GM12878 (cell line): ENCODE measurements at regions of chr20 and their contacts with region 1.

Region 1: GRCh38 chr20:64119681-64120341 is 12.4 kb upstream of the NPBWR2 start:
- DNase-seq: no peak
- ATAC-seq: peak; percentile 51
- H3K4me3 ChIP-seq: no peak overlapping the region
- H3K27ac ChIP-seq: no peak overlapping the region
- H3K4me1 ChIP-seq: peaks cover 5% of the 10 kb centered on the region
- H3K27me3 ChIP-seq: no peaks in the 10 kb centered on the region; a peak in 1 of 4 replicates
- CTCF ChIP-seq: no peak
- EP300 ChIP-seq: no peak
- POLR2A ChIP-seq: no peak
- RAD21 ChIP-seq: no peak

Region 2: DNA sequence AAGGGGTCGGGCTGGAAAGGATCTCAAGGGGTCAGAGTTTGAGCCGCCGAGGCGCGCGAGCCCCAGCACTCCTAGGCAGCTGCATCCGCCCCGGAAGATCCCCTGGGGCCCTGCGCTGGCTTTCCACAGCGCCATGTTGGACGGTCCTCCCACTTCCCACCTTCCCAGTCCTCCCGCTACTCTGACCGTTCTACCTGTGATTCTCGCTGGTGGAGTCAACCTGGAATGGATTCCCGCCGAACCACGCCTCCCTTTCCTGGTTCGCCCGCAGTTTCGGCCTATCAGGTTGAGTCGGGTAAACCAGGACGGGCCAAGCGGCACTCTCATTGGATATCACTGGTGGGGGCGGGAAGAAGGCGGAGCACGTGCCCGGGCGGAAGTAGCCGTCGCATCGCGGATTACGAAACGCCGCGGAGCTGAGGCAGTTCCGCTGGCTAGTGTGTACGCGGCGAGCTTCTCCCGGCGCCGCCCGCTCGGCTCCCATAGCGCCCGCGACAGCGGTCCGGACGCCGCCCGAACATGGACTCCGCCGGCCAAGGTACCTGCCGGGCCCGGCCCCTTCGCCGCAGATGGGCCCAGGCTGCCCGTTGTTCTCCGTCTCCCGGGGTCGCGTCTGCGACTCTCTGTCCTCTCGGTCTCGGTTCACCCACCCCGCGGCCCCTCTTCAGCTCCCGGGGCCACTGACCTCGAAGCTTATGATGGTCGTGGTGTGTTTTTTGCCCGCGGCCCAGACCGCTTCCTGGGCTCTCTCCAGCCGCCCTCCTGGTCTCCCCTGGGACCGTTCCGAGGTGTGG is 254.8 kb before region 1 on chr20 and contains the start of gene TPD52L2:
- CTCF ChIA-PET with region 1: interaction called, 12 read pairs
- POLR2A ChIA-PET with region 1: no interaction called
- RAD21 ChIA-PET with region 1: interaction called, 4 read pairs
- SMC1A ChIA-PET with region 1: no interaction called
- in situ Hi-C with region 1: no loop called
- intact Hi-C with region 1: no loop called
- DNase-seq: peak; percentile 94
- ATAC-seq: peak; percentile 91
- H3K4me3 ChIP-seq: peak within 1 kb of the TSS; percentile 96
- H3K27ac ChIP-seq: peak within 1 kb of the TSS; percentile 90
- H3K4me1 ChIP-seq: peaks cover 7% of the 10 kb centered on the region
- H3K27me3 ChIP-seq: no peaks in the 10 kb centered on the region
- CTCF ChIP-seq: no peak
- EP300 ChIP-seq: 0 out of 4 replicates have a peak, but pooled peaks of 1 of the 2 experiments have one; percentile 19
- POLR2A ChIP-seq: peak; percentile 96
- RAD21 ChIP-seq: no peak
- polyA plus RNA-seq, gene TPD52L2: 1.6 to 4.1 TPM

Region 3: GRCh38 chr20:64038565-64039292 is 81.1 kb before region 1 on chr20:
- CTCF ChIA-PET with region 1: interaction called, 27 read pairs
- POLR2A ChIA-PET with region 1: interaction called, 5 read pairs
- RAD21 ChIA-PET with region 1: interaction called, 10 read pairs
- SMC1A ChIA-PET with region 1: interaction called, 12 read pairs
- in situ Hi-C with region 1: no loop called
- intact Hi-C with region 1: loop called (anchors 1 kb)
- DNase-seq: no peak
- ATAC-seq: peak; percentile 68
- H3K4me3 ChIP-seq: peak overlapping the region; percentile 58
- H3K27ac ChIP-seq: peak overlapping the region; percentile 69
- H3K4me1 ChIP-seq: peaks cover 51% of the 10 kb centered on the region
- H3K27me3 ChIP-seq: no peaks in the 10 kb centered on the region
- CTCF ChIP-seq: peak; percentile 65 to 85 (median 82)
- EP300 ChIP-seq: no peak
- POLR2A ChIP-seq: peak; percentile 61
- RAD21 ChIP-seq: peak; percentile 72

Region 4: GRCh38 chr20:64079273-64080012 is 40.4 kb before region 1 on chr20 and contains the start of gene RGS19:
- CTCF ChIA-PET with region 1: interaction called, 65 read pairs
- POLR2A ChIA-PET with region 1: interaction called, 12 read pairs
- RAD21 ChIA-PET with region 1: interaction called, 67 read pairs
- SMC1A ChIA-PET with region 1: interaction called, 13 read pairs
- in situ Hi-C with region 1: no loop called
- intact Hi-C with region 1: loop called (anchors 1 kb)
- DNase-seq: no peak
- ATAC-seq: peak; percentile 45
- H3K4me3 ChIP-seq: peak within 1 kb of the TSS; percentile 83
- H3K27ac ChIP-seq: peak within 1 kb of the TSS; percentile 85
- H3K4me1 ChIP-seq: peaks cover 26% of the 10 kb centered on the region
- H3K27me3 ChIP-seq: peaks cover 2 to 4% of the 10 kb centered on the region in 2 experiments; a peak in 2 of 4 replicates
- CTCF ChIP-seq: no peak
- EP300 ChIP-seq: no peak
- POLR2A ChIP-seq: peak; percentile 67
- RAD21 ChIP-seq: no peak
- polyA plus RNA-seq, gene RGS19: 0.82 to 3.3 TPM

Region 5: GRCh38 chr20:64101731-64102621 is 17.8 kb before region 1 on chr20:
- CTCF ChIA-PET with region 1: interaction called, 23 read pairs
- POLR2A ChIA-PET with region 1: no interaction called
- RAD21 ChIA-PET with region 1: interaction called, 10 read pairs
- SMC1A ChIA-PET with region 1: interaction called, 7 read pairs
- in situ Hi-C with region 1: no loop called
- intact Hi-C with region 1: no loop called
- DNase-seq: no peak
- ATAC-seq: peak; percentile 83
- H3K4me3 ChIP-seq: peak overlapping the region; percentile 22; the same call in 1 of the 2 replicates
- H3K27ac ChIP-seq: no peak overlapping the region
- H3K4me1 ChIP-seq: peaks cover 9% of the 10 kb centered on the region
- H3K27me3 ChIP-seq: peaks cover 4 to 11% of the 10 kb centered on the region in 2 experiments; a peak in 3 of 4 replicates
- CTCF ChIP-seq: peak; percentile 60 to 83 (median 76)
- EP300 ChIP-seq: no peak
- POLR2A ChIP-seq: no peak
- RAD21 ChIP-seq: peak; percentile 40